Ascending aorta (tissue), 2 donors: ENCODE measurements at regions of chr14 and their contacts with region 1.

Region 1: GRCh38 chr14:105314287-105315200 is at the start of gene PACS2:
- DNase-seq: peak in 1 of 2 donors; percentile 83
- H3K4me3 ChIP-seq: peak within 1 kb of the TSS; percentile 84 to 92
- H3K27ac ChIP-seq: peak within 1 kb of the TSS; percentile 94 to 97
- H3K4me1 ChIP-seq: peaks cover 4 to 15% of the 10 kb centered on the region in 2 donors
- H3K27me3 ChIP-seq: no peaks in the 10 kb centered on the region
- CTCF ChIP-seq: no peak
- total RNA-seq, gene PACS2: 153 TPM

Region 2: GRCh38 chr14:105248368-105248756 is 66.2 kb before region 1 on chr14 and contains the start of gene BTBD6:
- intact Hi-C with region 1: loop called (anchors 10 kb)
- DNase-seq: peak; percentile 37 to 91
- H3K4me3 ChIP-seq: peak within 1 kb of the TSS; percentile 72
- H3K27ac ChIP-seq: peak within 1 kb of the TSS; percentile 84 to 88
- H3K4me1 ChIP-seq: peaks cover 4 to 17% of the 10 kb centered on the region in 2 donors
- H3K27me3 ChIP-seq: no peaks in the 10 kb centered on the region
- CTCF ChIP-seq: no peak
- total RNA-seq, gene BTBD6: 80.1 TPM

Region 3: GRCh38 chr14:105300792-105301533 is 13.6 kb before region 1 on chr14 and contains the start of gene BRF1:
- intact Hi-C with region 1: loop called (anchors 1 kb)
- DNase-seq: peak; percentile 88 to 98
- H3K4me3 ChIP-seq: peak within 1 kb of the TSS; percentile 62 to 84
- H3K27ac ChIP-seq: peak within 1 kb of the TSS; percentile 93 to 96
- H3K4me1 ChIP-seq: peaks cover 8 to 14% of the 10 kb centered on the region in 2 donors
- H3K27me3 ChIP-seq: no peaks in the 10 kb centered on the region
- CTCF ChIP-seq: no peak
- total RNA-seq, gene BRF1: 60.9 TPM

Region 4: DNA sequence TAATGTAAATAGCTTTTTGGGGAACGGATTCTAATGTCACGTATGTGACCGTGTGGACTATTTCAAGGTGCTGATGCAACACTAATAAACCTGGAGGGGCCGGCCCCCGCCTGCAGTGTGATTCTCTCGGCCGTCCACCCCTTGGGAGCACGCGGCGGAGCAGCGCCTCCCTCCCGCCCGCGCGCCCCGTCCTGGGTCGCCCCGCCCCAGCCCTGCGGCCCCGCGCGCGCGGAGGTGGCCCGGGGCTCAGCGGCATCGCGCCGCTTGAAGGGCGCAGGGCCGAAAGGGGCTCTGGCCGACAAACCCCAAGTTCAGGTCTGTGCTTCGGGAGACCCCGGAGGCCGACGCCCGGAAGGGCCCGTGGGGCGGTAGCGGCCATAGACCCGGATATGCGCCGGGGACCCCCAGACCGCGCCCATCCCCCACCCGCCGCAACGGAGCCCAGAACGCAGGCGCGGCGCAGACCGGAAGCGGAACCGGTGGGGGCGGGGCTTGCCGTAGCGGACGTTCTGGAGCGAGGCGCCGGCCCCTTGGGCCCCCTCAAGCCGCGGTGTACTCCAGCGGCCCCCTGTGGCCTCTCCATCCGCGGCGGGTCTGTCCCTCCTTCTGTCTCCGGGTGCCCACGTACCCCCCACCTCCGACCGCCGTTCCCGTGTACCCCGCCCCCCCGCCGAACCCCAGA is 83.6 kb after region 1 on chr14 and contains the start of gene TEX22:
- intact Hi-C with region 1: loop called (anchors 5 kb)
- DNase-seq: peak in 1 of 2 donors; percentile 92
- H3K4me3 ChIP-seq: peak within 1 kb of the TSS; percentile 80 to 90
- H3K27ac ChIP-seq: peak within 1 kb of the TSS; percentile 71 to 77
- H3K4me1 ChIP-seq: peaks cover 8% of the 10 kb centered on the region in 2 donors
- H3K27me3 ChIP-seq: no peaks in the 10 kb centered on the region
- CTCF ChIP-seq: peak in 1 of 3 experiments; percentile 15
- total RNA-seq, gene TEX22: not detected